Transverse colon (tissue), 4 donors: ENCODE measurements at regions of chr3 and their contacts with region 1.

Region 1: GRCh38 chr3:129593595-129594339 is 12.7 kb downstream of the PLXND1 start:
- DNase-seq: peak; percentile 43
- H3K4me3 ChIP-seq: no peak overlapping the region
- H3K27ac ChIP-seq: peak overlapping the region; percentile 78 to 86 (median 81)
- H3K4me1 ChIP-seq: peaks cover 18 to 64% (median 53%) of the 10 kb centered on the region in 4 donors
- H3K27me3 ChIP-seq: no peaks in the 10 kb centered on the region
- CTCF ChIP-seq: no peak
- EP300 ChIP-seq: no peak
- POLR2A ChIP-seq: peak; percentile 8

Region 2: DNA sequence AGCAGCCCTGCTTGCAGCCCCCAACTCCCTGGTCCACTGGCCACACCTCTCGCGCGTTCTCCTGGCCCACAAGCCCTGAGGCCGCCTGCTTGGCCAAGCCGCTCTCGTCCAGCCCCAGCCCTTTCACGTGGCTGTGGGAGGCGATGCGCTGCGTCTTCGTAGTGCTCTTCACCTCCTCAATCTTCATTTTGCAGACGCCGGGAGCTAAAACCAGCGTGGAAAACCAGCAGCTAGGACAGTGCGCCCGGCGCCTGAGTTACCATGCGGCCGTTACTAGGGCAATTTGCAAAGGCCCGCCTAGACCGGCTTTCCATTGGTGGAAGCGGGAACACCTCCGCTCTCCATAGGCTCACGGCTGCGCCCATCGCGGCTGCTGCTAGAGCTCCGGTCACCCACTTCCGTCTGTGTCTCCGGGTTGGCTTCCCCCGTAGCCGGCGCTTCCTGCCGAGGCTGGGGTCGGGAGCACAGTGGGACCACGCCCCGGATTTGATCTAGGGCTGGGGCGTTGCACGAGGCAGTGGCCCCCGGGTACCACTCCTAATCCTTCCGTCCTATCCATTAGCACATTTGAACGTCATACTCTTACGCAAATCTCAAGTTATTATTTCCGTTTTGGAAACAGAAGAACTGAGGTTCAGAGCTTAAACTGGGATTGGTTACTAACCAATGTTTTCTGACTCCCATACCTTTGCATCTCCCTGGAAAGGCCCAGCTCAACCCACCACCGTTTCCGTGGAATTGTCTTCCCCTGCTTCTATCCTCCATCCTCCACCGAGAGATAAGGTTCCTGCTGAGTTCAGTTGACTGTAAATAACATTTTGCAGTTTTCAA is 1470.0 kb before region 1 on chr3 and contains the start of gene RUVBL1:
- in situ Hi-C with region 1: no loop called
- intact Hi-C with region 1: loop called (anchors 5 kb)
- DNase-seq: peak; percentile 98
- H3K4me3 ChIP-seq: peak within 1 kb of the TSS; percentile 56 to 92 (median 76)
- H3K27ac ChIP-seq: peak within 1 kb of the TSS; percentile 69 to 84 (median 78)
- H3K4me1 ChIP-seq: peaks cover 0 to 10% (median 9%) of the 10 kb centered on the region in 4 donors
- H3K27me3 ChIP-seq: no peaks in the 10 kb centered on the region
- CTCF ChIP-seq: no peak
- EP300 ChIP-seq: no peak
- POLR2A ChIP-seq: peak; percentile 32
- total RNA-seq, gene RUVBL1: 1.4 to 16.4 (median 10.1) TPM in 3 of 4 donors, not detected in the other

Region 3: GRCh38 chr3:128482666-128483656 is 1110.8 kb before region 1 on chr3:
- in situ Hi-C with region 1: no loop called
- intact Hi-C with region 1: no loop called
- DNase-seq: no peak
- H3K4me3 ChIP-seq: no peak overlapping the region
- H3K27ac ChIP-seq: peak overlapping the region in 3 of 4 donors; percentile 10 to 48 (median 13)
- H3K4me1 ChIP-seq: peaks cover 8 to 21% (median 19%) of the 10 kb centered on the region in 4 donors
- H3K27me3 ChIP-seq: peaks cover 97% of the 10 kb centered on the region
- CTCF ChIP-seq: no peak
- EP300 ChIP-seq: no peak
- POLR2A ChIP-seq: no peak

Region 4: GRCh38 chr3:129558772-129559564 is 34.8 kb before region 1 on chr3:
- in situ Hi-C with region 1: no loop called
- intact Hi-C with region 1: loop called (anchors 1 kb)
- DNase-seq: no peak
- H3K4me3 ChIP-seq: no peak overlapping the region
- H3K27ac ChIP-seq: peak overlapping the region in 3 of 4 donors; percentile 34 to 83 (median 80)
- H3K4me1 ChIP-seq: peaks cover 10 to 52% (median 25%) of the 10 kb centered on the region in 4 donors
- H3K27me3 ChIP-seq: no peaks in the 10 kb centered on the region
- CTCF ChIP-seq: no peak
- EP300 ChIP-seq: no peak
- POLR2A ChIP-seq: no peak